ENCODE measurements at regions of chr17 and their contacts with region 1.

Region 1: DNA sequence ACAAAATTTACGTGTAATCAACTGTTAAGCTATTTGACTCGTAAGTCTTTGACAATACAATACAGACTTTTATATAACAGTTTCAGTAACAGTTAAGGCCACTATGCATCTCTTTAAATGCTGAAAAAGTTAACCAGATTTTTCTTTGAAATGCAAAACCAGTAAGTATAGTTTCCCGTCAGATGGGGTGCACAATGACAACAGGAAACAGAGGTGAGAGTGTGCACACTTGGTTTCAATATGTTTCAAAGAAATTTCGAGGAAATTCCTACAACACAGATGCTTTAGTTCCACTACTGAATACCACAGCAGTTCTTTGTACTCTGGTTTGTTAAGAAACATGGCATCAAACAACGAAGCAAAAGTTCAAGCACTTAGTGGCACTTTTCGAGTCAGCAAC is 48.4 kb downstream of the RNF157 start:
- DNase-seq: no peak
- ATAC-seq: no peak
- H3K4me3 ChIP-seq: peak overlapping the region in 1 of 12 donors; percentile 8
- H3K27ac ChIP-seq: peak overlapping the region in 1 of 12 donors; percentile 85
- H3K4me1 ChIP-seq: peaks cover 0 to 20% (median 9%) of the 10 kb centered on the region in 12 donors
- H3K27me3 ChIP-seq: no peaks in the 10 kb centered on the region
- CTCF ChIP-seq: no peak
- POLR2A ChIP-seq: no peak

Region 2: GRCh38 chr17:76240461-76241203 is 48.7 kb after region 1 on chr17 and contains the start of gene RNF157:
- intact Hi-C with region 1: loop called in 2 of 10 experiments (anchors 5 kb)
- DNase-seq: peak; percentile 62 to 84 (median 71)
- ATAC-seq: peak; percentile 75 to 91 (median 86)
- H3K4me3 ChIP-seq: peak within 1 kb of the TSS; percentile 36 to 78 (median 68)
- H3K27ac ChIP-seq: peak within 1 kb of the TSS in 9 of 12 donors; percentile 24 to 59 (median 46)
- H3K4me1 ChIP-seq: peaks cover 0 to 27% (median 9%) of the 10 kb centered on the region in 12 donors
- H3K27me3 ChIP-seq: peaks cover 0 to 37% (median 0%) of the 10 kb centered on the region in 9 donors
- CTCF ChIP-seq: no peak
- POLR2A ChIP-seq: peak in 1 of 2 donors; percentile 29
- total RNA-seq, gene RNF157: 3.9 to 7.4 (median 5.2) TPM

Region 3: GRCh38 chr17:76264755-76265596 is 73.1 kb after region 1 on chr17 and contains the start of gene UBALD2:
- intact Hi-C with region 1: loop called in 4 of 10 experiments (anchors 5 to 10 kb)
- DNase-seq: peak; percentile 99 to 100 (median 100)
- ATAC-seq: peak; percentile 95 to 97 (median 96)
- H3K4me3 ChIP-seq: peak within 1 kb of the TSS; percentile 85 to 99 (median 94)
- H3K27ac ChIP-seq: peak within 1 kb of the TSS; percentile 83 to 98 (median 92)
- H3K4me1 ChIP-seq: peaks cover 11 to 72% (median 43%) of the 10 kb centered on the region in 12 donors
- H3K27me3 ChIP-seq: no peaks in the 10 kb centered on the region
- CTCF ChIP-seq: no peak
- POLR2A ChIP-seq: peak; percentile 84 to 94
- total RNA-seq, gene UBALD2: 8.5 to 49.8 (median 24.5) TPM

Region 4: DNA sequence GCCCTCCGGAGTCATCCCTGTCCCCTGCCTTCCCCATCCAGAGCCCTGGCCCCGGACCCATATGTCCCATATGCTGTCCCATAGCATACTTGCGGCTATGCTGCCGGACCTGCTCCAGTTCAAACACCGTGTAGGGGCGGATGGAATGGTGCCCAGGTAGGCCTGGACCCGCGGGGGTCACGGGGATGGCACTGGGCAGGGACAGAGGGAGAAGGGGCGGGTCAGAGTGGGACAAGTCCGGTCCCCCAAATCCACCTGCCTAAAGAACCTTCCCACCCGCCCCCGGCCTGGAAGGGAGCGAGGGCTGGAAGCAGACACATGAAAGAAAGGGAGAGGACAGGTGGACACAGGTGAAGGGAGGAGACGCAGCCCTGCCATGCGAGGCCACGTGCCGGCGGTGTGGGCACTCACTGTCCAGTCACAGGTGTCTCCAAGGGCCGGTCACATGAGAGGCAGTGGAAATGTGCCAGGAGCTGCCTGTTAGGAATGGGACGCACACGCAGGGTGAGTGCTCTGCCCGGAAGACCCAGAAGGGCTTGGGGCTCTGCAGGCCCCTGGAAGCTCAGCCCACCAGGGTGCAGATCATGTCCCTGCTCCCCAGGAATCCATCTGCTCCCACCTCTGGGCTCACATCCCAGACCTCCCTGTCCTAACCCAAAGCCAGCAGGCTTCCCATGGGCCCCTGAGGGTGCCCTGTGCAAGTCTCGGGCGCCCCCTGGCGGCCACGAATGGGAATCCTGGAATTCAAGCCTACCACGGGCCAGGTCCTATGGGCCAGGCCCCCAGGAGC is 87.3 kb after region 1 on chr17:
- intact Hi-C with region 1: loop called in 4 of 10 experiments (anchors 5 to 10 kb)
- DNase-seq: peak; percentile 81 to 94 (median 85)
- ATAC-seq: peak; percentile 81 to 93 (median 87)
- H3K4me3 ChIP-seq: peak overlapping the region in 1 of 12 donors; percentile 2
- H3K27ac ChIP-seq: no peak overlapping the region
- H3K4me1 ChIP-seq: peaks cover 0 to 20% (median 5%) of the 10 kb centered on the region in 12 donors
- H3K27me3 ChIP-seq: no peaks in the 10 kb centered on the region
- CTCF ChIP-seq: peak; percentile 95 to 100 (median 99)
- POLR2A ChIP-seq: no peak

Region 5: DNA sequence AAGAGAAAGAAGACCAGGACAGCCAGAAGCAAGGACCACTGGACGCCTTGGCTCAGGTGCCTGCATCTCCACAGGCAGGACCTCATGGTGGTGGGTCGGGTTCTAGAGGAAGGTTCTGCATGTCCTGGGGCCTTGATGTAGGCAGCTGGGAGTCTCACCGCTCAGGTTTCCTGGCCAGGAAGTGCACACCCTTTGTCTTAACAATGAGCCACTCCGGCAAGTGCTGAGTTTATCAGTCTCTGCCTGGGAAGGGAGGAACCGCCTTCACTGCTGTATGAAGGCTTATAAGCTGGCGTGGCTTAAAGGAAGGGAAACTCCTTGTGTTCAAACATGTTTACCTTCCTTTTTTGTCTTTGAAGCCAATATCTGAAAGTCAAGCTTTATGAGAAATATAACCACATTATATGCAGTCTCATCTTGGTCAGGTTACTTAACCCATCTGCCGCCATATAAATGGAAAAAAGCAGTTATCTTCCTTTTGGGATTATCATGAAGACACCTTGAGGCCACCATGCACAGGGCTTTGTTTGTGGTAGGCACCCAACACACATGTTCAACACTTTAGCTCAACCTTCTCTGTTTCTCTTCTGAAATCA is 451.8 kb after region 1 on chr17 and contains the start of gene ST6GALNAC1:
- intact Hi-C with region 1: no loop called
- DNase-seq: peak in 4 of 5 donors; percentile 40 to 53 (median 47)
- ATAC-seq: peak; percentile 82 to 96 (median 89)
- H3K4me3 ChIP-seq: peak within 1 kb of the TSS in 11 of 12 donors; percentile 20 to 52 (median 43)
- H3K27ac ChIP-seq: peak within 1 kb of the TSS; percentile 54 to 87 (median 74)
- H3K4me1 ChIP-seq: peaks cover 0 to 29% (median 5%) of the 10 kb centered on the region in 12 donors
- H3K27me3 ChIP-seq: no peaks in the 10 kb centered on the region
- CTCF ChIP-seq: no peak
- POLR2A ChIP-seq: no peak
- total RNA-seq, gene ST6GALNAC1: 1.7 to 10.3 (median 3.5) TPM

Measured in heart left ventricle (tissue), 16 donors.